HepG2 (cell line): ENCODE measurements at regions of chr2 and their contacts with region 1.

Region 1: DNA sequence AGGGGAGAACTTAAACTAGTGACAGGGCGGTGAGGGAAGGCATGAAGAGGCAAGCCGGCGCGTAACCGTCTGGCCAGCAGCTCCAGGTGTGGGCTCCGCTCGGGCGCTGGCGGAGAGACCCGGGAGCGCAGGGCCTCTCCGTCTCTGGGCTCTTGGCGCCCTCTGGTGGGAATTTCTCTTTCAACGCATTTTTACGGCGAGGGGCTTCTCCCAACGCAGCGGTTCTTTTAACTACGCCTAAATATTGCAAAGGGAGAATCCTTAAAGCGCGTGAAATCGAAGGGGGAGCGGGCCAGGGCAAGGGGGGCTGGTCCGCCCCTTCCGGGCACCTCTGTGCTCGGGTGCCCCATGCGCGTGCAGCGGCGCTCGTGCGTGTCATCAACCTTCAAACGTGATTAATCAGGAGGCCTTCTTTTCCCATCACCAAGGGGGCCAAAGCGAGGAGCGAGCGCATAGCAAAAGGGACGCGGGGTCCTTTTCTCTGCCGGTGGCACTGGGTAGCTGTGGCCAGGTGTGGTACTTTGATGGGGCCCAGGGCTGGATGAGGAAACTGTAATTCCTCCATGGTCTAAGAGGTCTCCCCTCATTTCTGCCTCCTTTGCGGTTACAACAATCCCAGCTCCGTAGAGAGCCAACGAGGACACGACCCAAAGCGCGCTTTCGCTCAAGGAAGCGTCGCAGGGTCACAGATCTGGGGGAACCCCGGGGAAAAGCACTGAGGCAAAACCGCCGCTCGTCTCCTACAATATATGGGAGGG is 762 bp upstream of the GAD1 start:
- DNase-seq: peak; percentile 68
- ATAC-seq: peak; percentile 82
- H3K4me3 ChIP-seq: peak overlapping the region; percentile 32 to 74 (median 45); a peak in 5 of 6 replicates
- H3K27ac ChIP-seq: no peak overlapping the region
- H3K4me1 ChIP-seq: peaks cover 27% of the 10 kb centered on the region
- H3K27me3 ChIP-seq: peaks cover 23 to 72% of the 10 kb centered on the region in 2 experiments
- CTCF ChIP-seq: peak; percentile 91
- EP300 ChIP-seq: no peak
- POLR2A ChIP-seq: no peak
- RAD21 ChIP-seq: peak; percentile 98

Region 2: GRCh38 chr2:170235860-170236679 is 579.9 kb before region 1 on chr2:
- CTCF ChIA-PET with region 1: no interaction called
- POLR2A ChIA-PET with region 1: no interaction called
- in situ Hi-C with region 1: loop called (anchors 10 kb)
- intact Hi-C with region 1: loop called (anchors 2 kb)
- DNase-seq: peak; percentile 54
- ATAC-seq: peak; percentile 73
- H3K4me3 ChIP-seq: no peak overlapping the region
- H3K27ac ChIP-seq: no peak overlapping the region
- H3K4me1 ChIP-seq: no peaks in the 10 kb centered on the region
- H3K27me3 ChIP-seq: peaks cover 0 to 23% of the 10 kb centered on the region in 2 experiments; a peak in 4 of 5 replicates
- CTCF ChIP-seq: peak; percentile 69
- EP300 ChIP-seq: no peak
- POLR2A ChIP-seq: no peak
- RAD21 ChIP-seq: peak; percentile 47

Region 3: GRCh38 chr2:170361090-170361936 is 454.6 kb before region 1 on chr2:
- CTCF ChIA-PET with region 1: interaction called, 48 read pairs
- POLR2A ChIA-PET with region 1: no interaction called
- in situ Hi-C with region 1: no loop called
- intact Hi-C with region 1: loop called (anchors 2 kb)
- DNase-seq: peak; percentile 48
- ATAC-seq: peak; percentile 93
- H3K4me3 ChIP-seq: no peak overlapping the region
- H3K27ac ChIP-seq: no peak overlapping the region
- H3K4me1 ChIP-seq: no peaks in the 10 kb centered on the region
- H3K27me3 ChIP-seq: peaks cover 2 to 39% of the 10 kb centered on the region in 2 experiments; a peak in 4 of 5 replicates
- CTCF ChIP-seq: peak; percentile 84
- EP300 ChIP-seq: no peak
- POLR2A ChIP-seq: no peak
- RAD21 ChIP-seq: peak; percentile 59; the same call in 1 of the 2 replicates

Region 4: GRCh38 chr2:170396799-170397459 is 419.0 kb before region 1 on chr2:
- CTCF ChIA-PET with region 1: interaction called, 61 read pairs
- POLR2A ChIA-PET with region 1: no interaction called
- in situ Hi-C with region 1: no loop called
- intact Hi-C with region 1: loop called (anchors 1 kb)
- DNase-seq: peak; percentile 43
- ATAC-seq: peak; percentile 74
- H3K4me3 ChIP-seq: no peak overlapping the region
- H3K27ac ChIP-seq: no peak overlapping the region
- H3K4me1 ChIP-seq: peaks cover 16% of the 10 kb centered on the region
- H3K27me3 ChIP-seq: peaks cover 0 to 9% of the 10 kb centered on the region in 2 experiments; a peak in 1 of 5 replicates
- CTCF ChIP-seq: peak; percentile 74
- EP300 ChIP-seq: no peak
- POLR2A ChIP-seq: no peak
- RAD21 ChIP-seq: peak; percentile 68

Region 5: GRCh38 chr2:170523506-170523905 is 292.4 kb before region 1 on chr2:
- CTCF ChIA-PET with region 1: interaction called, 3 read pairs
- POLR2A ChIA-PET with region 1: no interaction called
- in situ Hi-C with region 1: no loop called
- intact Hi-C with region 1: loop called (anchors 1 kb)
- DNase-seq: peak; percentile 44
- ATAC-seq: peak; percentile 92
- H3K4me3 ChIP-seq: no peak overlapping the region
- H3K27ac ChIP-seq: no peak overlapping the region
- H3K4me1 ChIP-seq: peaks cover 5% of the 10 kb centered on the region; the same call in 1 of the 2 replicates
- H3K27me3 ChIP-seq: peaks cover 2 to 44% of the 10 kb centered on the region in 2 experiments; a peak in 4 of 5 replicates
- CTCF ChIP-seq: peak; percentile 44
- EP300 ChIP-seq: no peak
- POLR2A ChIP-seq: no peak
- RAD21 ChIP-seq: peak; percentile 51

Region 6: GRCh38 chr2:170739048-170739447 is 76.9 kb before region 1 on chr2:
- CTCF ChIA-PET with region 1: interaction called, 3 read pairs
- POLR2A ChIA-PET with region 1: no interaction called
- in situ Hi-C with region 1: no loop called
- intact Hi-C with region 1: loop called (anchors 5 kb)
- DNase-seq: peak; percentile 54
- ATAC-seq: peak; percentile 30; the same call in 1 of the 3 replicates
- H3K4me3 ChIP-seq: no peak overlapping the region
- H3K27ac ChIP-seq: no peak overlapping the region
- H3K4me1 ChIP-seq: peaks cover 12% of the 10 kb centered on the region
- H3K27me3 ChIP-seq: no peaks in the 10 kb centered on the region; a peak in 2 of 5 replicates
- CTCF ChIP-seq: no peak
- EP300 ChIP-seq: no peak
- POLR2A ChIP-seq: no peak
- RAD21 ChIP-seq: no peak